ENCODE measurements at regions of chr7 and their contacts with region 1.

Region 1: DNA sequence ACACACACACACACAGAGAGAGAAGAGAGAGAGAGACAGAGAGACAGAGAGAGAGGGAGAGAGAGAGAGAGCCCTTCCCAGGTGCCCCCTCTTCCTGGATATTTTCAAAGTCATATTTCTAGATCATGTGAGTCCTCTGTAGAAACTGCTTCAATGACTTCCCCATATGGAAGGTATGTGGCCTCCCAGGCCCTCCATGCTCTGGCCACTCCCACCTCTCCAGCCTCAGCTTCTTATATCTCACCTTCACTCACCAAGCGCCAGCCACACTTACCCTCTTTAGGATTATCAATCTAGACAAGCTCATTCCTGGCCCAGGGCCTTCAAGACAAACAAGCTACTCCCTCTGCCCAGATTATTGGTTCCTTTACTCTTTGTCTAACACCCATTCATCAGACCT is 259.7 kb downstream of the MTERF1 start:
- DNase-seq: no peak
- ATAC-seq: no peak
- H3K4me3 ChIP-seq: no peak overlapping the region
- H3K27ac ChIP-seq: no peak overlapping the region
- H3K4me1 ChIP-seq: peaks cover 1% of the 10 kb centered on the region
- H3K27me3 ChIP-seq: no peaks in the 10 kb centered on the region

Region 2: DNA sequence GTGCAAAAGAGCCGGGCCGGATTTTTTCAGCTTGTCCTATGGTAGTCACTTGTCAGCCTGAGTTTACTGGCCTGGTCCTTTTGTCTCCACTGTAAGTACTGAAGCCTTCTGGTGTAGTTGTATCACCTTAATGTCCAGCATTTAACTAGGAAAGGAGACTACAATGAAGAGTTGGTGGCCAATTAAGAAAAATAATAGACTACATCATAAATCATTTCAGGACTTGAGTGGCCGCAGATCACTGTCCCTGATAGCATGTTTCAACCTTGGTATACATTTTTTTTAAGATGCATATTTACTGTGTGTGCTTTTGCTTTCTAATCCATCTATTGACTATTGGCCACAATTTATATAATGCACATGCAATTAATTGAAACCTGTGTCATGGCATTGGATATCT is 350.5 kb before region 1 on chr7:
- intact Hi-C with region 1: loop called in 1 of 4 experiments (anchors 5 kb)
- DNase-seq: no peak
- ATAC-seq: no peak
- H3K4me3 ChIP-seq: no peak overlapping the region
- H3K27ac ChIP-seq: no peak overlapping the region
- H3K4me1 ChIP-seq: peaks cover 3% of the 10 kb centered on the region
- H3K27me3 ChIP-seq: no peaks in the 10 kb centered on the region

Measured in right cardiac atrium (tissue), 5 donors.